Thyroid gland (tissue), 4 donors: ENCODE measurements at regions of chr9 and their contacts with region 1.

Region 1: DNA sequence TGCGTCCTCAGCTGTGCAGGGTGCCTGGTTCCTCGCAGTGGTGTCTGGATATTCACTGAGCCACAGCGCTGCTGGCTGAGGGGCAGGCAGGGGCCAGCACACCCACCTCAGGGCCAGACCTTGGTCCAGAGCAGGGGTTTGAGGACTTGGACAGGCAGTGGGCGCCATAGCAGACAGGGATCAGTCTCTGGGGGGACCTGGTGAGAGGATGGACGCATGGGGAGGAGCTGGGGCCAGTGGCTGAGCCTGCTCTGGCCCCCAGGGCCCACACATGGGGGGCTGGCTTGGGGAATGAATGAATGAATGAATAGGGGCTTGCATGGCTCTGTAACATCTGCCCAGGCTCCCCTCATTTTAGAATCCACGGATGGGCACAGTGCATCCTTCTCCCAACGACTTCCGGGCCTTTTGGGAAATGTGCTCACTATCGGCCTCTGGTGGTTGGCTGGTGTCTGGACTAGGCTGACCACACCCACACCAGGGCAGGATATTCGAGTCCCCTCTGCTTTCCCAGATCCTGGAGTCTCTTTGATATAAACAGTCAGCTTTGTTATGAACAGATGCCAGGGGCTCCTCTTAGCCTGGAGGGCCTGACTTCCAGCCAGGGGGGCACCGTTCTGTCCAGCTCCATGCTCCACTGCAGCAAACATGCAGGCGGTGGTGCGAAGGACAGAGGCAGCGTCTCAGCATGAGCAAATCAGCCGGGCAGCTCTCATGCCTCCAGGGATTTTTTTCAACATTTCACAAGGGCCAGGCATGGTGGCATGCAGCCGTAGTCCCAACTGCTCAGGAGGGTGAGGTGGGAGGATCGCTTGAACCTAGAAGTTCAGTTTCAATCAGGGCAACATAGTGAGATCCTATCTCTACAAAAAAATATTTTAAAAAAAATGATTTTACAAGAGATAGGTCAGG is 62.6 kb downstream of the NEK6 start:
- DNase-seq: peak; percentile 70 to 77
- H3K4me3 ChIP-seq: no peak overlapping the region
- H3K27ac ChIP-seq: no peak overlapping the region
- H3K4me1 ChIP-seq: no peaks in the 10 kb centered on the region
- H3K27me3 ChIP-seq: no peaks in the 10 kb centered on the region
- CTCF ChIP-seq: peak in 5 of 6 experiments; percentile 61 to 84 (median 79)
- POLR2A ChIP-seq: no peak

Region 2: GRCh38 chr9:124133727-124134126 is 186.6 kb before region 1 on chr9:
- intact Hi-C with region 1: loop called (anchors 5 kb)
- DNase-seq: peak in 1 of 2 donors; percentile 12
- H3K4me3 ChIP-seq: no peak overlapping the region
- H3K27ac ChIP-seq: no peak overlapping the region
- H3K4me1 ChIP-seq: no peaks in the 10 kb centered on the region
- H3K27me3 ChIP-seq: no peaks in the 10 kb centered on the region
- CTCF ChIP-seq: peak in 1 of 6 experiments; percentile 17
- POLR2A ChIP-seq: no peak